GM12878 (cell line): ENCODE measurements at regions of chr2 and their contacts with region 1.

Region 1: DNA sequence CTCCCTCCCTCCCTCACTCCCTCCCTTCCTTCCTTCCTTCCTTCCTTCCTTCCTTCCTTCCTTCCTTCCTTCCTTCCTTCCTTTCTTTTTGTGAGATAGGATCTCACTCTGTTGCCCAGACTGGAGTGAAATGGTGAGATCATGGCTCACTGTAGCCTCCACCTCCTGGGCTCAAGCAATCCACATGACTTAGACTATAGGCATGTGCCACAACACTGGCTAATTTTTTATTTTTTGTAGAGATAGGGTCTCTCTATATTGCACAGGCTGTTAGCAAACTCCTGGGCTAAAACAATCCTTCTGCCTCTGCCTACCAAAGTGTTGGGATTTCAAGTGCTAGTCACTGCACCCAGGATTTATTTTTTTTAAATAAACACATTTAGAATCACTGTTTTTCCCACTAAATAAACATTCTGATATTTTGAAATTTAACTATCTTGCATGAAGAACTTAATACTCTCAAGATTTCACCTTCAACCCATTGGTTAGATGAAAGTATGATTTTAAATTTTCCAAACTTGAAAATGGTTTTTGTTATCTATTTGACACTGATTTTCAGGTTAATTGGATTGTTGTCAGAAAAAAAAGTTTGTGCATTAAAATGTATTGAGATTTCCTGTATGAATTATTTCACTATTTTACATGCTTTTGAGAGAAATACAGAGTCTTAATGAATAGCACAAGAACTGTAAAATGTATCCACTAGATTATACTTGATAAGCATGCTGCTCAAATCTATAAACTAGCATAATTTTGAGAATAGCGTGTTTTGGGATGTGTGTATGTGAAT is 745.1 kb downstream of the TSN start:
- DNase-seq: no peak
- ATAC-seq: no peak
- H3K4me3 ChIP-seq: no peak overlapping the region
- H3K27ac ChIP-seq: no peak overlapping the region
- H3K4me1 ChIP-seq: no peaks in the 10 kb centered on the region
- H3K27me3 ChIP-seq: no peaks in the 10 kb centered on the region
- CTCF ChIP-seq: no peak
- EP300 ChIP-seq: no peak
- POLR2A ChIP-seq: no peak
- RAD21 ChIP-seq: no peak

Region 2: DNA sequence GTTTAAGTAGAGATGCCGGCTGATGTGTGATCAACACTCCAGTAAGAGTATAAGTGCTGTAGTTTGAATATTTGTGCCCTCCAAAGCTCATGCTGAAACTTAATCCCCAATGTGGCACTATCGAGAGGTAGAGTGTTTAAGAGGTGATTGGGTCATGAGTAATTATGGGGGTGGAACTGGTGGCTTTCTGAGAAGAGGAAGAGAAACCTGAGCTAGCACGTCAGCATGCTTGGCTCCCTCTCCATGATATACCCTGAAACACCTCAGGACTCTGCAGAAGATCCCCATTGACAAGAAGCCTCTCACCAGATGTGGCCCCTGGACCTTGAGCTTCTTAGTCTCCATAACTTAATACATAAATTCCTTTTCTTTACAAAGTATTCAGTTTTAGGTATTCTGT is 160.3 kb before region 1 on chr2:
- CTCF ChIA-PET with region 1: no interaction called
- POLR2A ChIA-PET with region 1: no interaction called
- RAD21 ChIA-PET with region 1: no interaction called
- SMC1A ChIA-PET with region 1: no interaction called
- in situ Hi-C with region 1: no loop called
- intact Hi-C with region 1: no loop called
- DNase-seq: peak; percentile 39
- ATAC-seq: peak; percentile 97
- H3K4me3 ChIP-seq: no peak overlapping the region
- H3K27ac ChIP-seq: no peak overlapping the region
- H3K4me1 ChIP-seq: peaks cover 6% of the 10 kb centered on the region
- H3K27me3 ChIP-seq: no peaks in the 10 kb centered on the region
- CTCF ChIP-seq: no peak
- EP300 ChIP-seq: peak; percentile 79 to 91; a peak in 3 of 4 replicates
- POLR2A ChIP-seq: no peak
- RAD21 ChIP-seq: no peak

Region 3: GRCh38 chr2:122471753-122472152 is 28.8 kb before region 1 on chr2:
- CTCF ChIA-PET with region 1: no interaction called
- POLR2A ChIA-PET with region 1: no interaction called
- RAD21 ChIA-PET with region 1: no interaction called
- SMC1A ChIA-PET with region 1: no interaction called
- in situ Hi-C with region 1: no loop called
- intact Hi-C with region 1: no loop called
- DNase-seq: no peak
- ATAC-seq: no peak
- H3K4me3 ChIP-seq: no peak overlapping the region
- H3K27ac ChIP-seq: no peak overlapping the region
- H3K4me1 ChIP-seq: no peaks in the 10 kb centered on the region
- H3K27me3 ChIP-seq: no peaks in the 10 kb centered on the region
- CTCF ChIP-seq: no peak
- EP300 ChIP-seq: no peak
- POLR2A ChIP-seq: no peak
- RAD21 ChIP-seq: no peak

Region 4: GRCh38 chr2:122519366-122519765 is 18.9 kb after region 1 on chr2:
- CTCF ChIA-PET with region 1: interaction called, 4 read pairs
- POLR2A ChIA-PET with region 1: interaction called, 3 read pairs
- RAD21 ChIA-PET with region 1: interaction called, 4 read pairs
- SMC1A ChIA-PET with region 1: interaction called, 10 read pairs
- in situ Hi-C with region 1: no loop called
- intact Hi-C with region 1: no loop called
- DNase-seq: no peak
- ATAC-seq: no peak
- H3K4me3 ChIP-seq: no peak overlapping the region
- H3K27ac ChIP-seq: no peak overlapping the region
- H3K4me1 ChIP-seq: no peaks in the 10 kb centered on the region
- H3K27me3 ChIP-seq: no peaks in the 10 kb centered on the region
- CTCF ChIP-seq: 0 out of 6 replicates have a peak, but pooled peaks of 1 of the 3 experiments have one; percentile 2
- EP300 ChIP-seq: no peak
- POLR2A ChIP-seq: no peak
- RAD21 ChIP-seq: no peak